Dorsolateral prefrontal cortex (tissue), 120 donors: ENCODE measurements at regions of chr11 and their contacts with region 1.

Region 1: DNA sequence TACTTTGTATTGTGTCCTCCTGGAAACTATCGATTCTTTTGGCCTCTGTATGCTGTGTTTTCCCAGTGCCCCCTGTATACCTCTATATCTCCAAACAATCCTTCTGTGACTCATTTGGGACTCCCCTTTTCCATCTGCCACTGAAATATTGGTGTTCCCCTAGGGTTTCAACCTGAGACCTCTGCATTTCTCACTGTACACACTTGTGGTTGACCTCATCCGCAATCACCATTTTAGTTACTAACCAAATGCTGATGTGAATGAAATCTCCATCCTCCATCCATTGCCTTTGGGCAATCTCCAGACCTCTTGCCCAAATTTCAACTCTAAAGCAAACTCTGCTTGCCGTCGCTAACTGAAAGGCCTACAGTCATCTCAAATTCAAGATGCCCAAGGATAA is 190.6 kb upstream of the PLET1 start:
- DNase-seq: no peak
- H3K4me3 ChIP-seq: no peak overlapping the region
- H3K27ac ChIP-seq: no peak overlapping the region
- H3K27me3 ChIP-seq: no peaks in the 10 kb centered on the region
- CTCF ChIP-seq: no peak

Region 2: DNA sequence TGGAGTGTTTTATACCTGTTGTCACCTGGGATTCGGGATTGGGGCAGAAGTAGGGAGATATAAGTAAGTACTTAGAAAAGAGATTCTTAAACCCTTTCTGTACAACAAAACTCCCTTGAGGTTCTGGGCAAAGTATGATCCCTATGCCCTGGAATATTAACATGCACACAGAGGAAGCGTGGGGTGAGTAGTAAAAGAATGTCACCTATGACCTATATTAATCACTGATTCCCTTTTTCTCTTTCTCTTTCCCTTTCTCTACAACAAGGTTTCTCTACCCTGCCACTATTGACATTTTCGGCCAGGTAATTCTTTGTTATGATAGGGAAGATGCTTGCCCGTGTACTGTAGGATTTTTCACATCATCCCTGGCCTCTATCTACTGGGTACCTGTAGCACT is 19.1 kb after region 1 on chr11:
- intact Hi-C with region 1: loop called in 1 of 2 experiments (anchors 2 kb)
- DNase-seq: no peak
- H3K4me3 ChIP-seq: no peak overlapping the region
- H3K27ac ChIP-seq: no peak overlapping the region
- H3K27me3 ChIP-seq: peaks cover 0 to 9% (median 0%) of the 10 kb centered on the region in 45 donors
- CTCF ChIP-seq: no peak